ENCODE measurements at regions of chr15 and their contacts with region 1.

Region 1: GRCh38 chr15:78049691-78050440 is 27.6 kb downstream of the TBC1D2B start:
- DNase-seq: peak in 2 of 3 donors; percentile 78 to 87
- H3K4me3 ChIP-seq: peak overlapping the region in 5 of 7 experiments; percentile 5 to 52 (median 9)
- H3K27ac ChIP-seq: peak overlapping the region; percentile 3 to 52
- H3K4me1 ChIP-seq: peaks cover 57 to 98% (median 84%) of the 10 kb centered on the region in 4 experiments
- H3K27me3 ChIP-seq: no peaks in the 10 kb centered on the region

Region 2: DNA sequence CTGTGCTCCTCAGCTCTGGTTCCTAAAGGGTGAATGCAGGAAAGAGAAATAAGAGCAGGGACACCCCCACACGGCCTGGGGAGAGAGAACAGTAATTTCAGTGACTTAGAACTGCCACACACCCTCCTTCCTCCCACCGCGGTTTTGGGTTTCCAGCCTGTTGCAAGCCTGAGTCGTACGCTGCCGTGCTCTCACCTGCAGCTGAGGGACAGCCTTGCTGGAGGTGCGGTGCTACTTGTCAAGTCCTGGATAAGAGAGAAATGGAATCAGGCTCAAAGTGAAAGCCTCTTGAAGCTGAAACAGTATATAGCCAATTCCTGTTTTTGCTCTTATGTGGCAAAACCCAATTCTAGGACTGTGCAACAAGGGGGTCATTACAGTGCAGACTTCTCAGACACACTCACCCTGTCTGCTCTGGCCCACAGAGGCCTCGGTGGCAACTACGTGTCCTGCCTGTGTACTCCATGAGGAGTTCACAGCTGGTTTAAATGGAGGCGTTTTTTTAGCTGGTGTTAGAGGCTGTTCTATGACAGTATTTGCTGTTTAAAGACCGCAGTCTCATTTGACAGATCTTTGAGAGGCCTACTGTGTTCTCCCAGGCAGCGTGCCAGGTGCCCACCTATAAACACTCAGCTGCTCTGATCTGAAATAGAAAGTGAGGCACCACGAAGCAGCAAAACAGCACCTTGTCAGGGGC is 15.2 kb before region 1 on chr15:
- CTCF ChIA-PET with region 1: interaction called, 22 read pairs
- POLR2A ChIA-PET with region 1: no interaction called
- DNase-seq: peak; percentile 48 to 81 (median 71)
- H3K4me3 ChIP-seq: peak overlapping the region in 5 of 7 experiments; percentile 8 to 60 (median 38)
- H3K27ac ChIP-seq: peak overlapping the region; percentile 25 to 64
- H3K4me1 ChIP-seq: peaks cover 47 to 84% (median 74%) of the 10 kb centered on the region in 4 experiments
- H3K27me3 ChIP-seq: no peaks in the 10 kb centered on the region

Measured in common myeloid progenitor, CD34-positive (primary cell).